Right cardiac atrium (tissue), 5 donors: ENCODE measurements at regions of chr1 and their contacts with region 1.

Region 1: GRCh38 chr1:78114034-78114956 is 68.5 kb downstream of the GIPC2 start:
- DNase-seq: peak in 1 of 3 donors; percentile 61
- ATAC-seq: peak; percentile 73 to 75
- H3K4me3 ChIP-seq: no peak overlapping the region
- H3K27ac ChIP-seq: no peak overlapping the region
- H3K4me1 ChIP-seq: no peaks in the 10 kb centered on the region
- H3K27me3 ChIP-seq: no peaks in the 10 kb centered on the region

Region 2: GRCh38 chr1:77978969-77979876 is 135.1 kb before region 1 on chr1 and contains the start of gene FUBP1:
- intact Hi-C with region 1: loop called in 3 of 4 experiments (anchors 2 to 10 kb)
- DNase-seq: peak; percentile 93 to 96 (median 96)
- ATAC-seq: peak; percentile 94 to 95
- H3K4me3 ChIP-seq: peak within 1 kb of the TSS; percentile 95
- H3K27ac ChIP-seq: peak within 1 kb of the TSS; percentile 100
- H3K4me1 ChIP-seq: peaks cover 5% of the 10 kb centered on the region
- H3K27me3 ChIP-seq: no peaks in the 10 kb centered on the region
- total RNA-seq, gene FUBP1: 57.6 to 73.0 (median 58.9) TPM

Region 3: DNA sequence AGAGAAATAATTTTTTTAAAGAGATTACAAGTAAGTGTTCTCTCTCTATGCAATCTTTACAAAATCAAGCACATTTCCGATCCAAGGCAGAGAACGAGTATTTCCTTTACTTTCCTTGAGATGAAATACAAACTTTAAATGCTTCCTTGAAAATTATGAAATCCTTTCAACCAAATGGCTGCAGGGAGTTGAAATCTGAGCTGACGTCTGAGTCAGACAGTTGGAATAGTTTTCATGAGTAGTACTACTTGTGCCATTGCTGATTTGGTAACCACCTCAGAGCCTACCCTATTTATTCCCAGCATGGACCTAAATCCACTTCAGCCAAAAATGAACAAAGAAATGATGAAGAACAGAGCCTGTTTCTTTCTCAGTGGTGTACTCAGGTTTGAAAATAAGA is 115.0 kb after region 1 on chr1:
- intact Hi-C with region 1: no loop called
- DNase-seq: no peak
- ATAC-seq: peak; percentile 78 to 79
- H3K4me3 ChIP-seq: no peak overlapping the region
- H3K27ac ChIP-seq: no peak overlapping the region
- H3K4me1 ChIP-seq: no peaks in the 10 kb centered on the region
- H3K27me3 ChIP-seq: no peaks in the 10 kb centered on the region